Activated CD4-positive, alpha-beta memory T cell treated with anti-CD3 and anti-CD28 coated beads for 36 hours (primary cell): ENCODE measurements at regions of chr6 and their contacts with region 1.

Region 1: GRCh38 chr6:140921366-140922226 is 1211.1 kb upstream of the GJE1 start:
- DNase-seq: no peak
- H3K4me3 Mint-ChIP-seq: no peak overlapping the region
- H3K27ac Mint-ChIP-seq: no peak overlapping the region
- H3K4me1 Mint-ChIP-seq: peaks cover 7% of the 10 kb centered on the region
- H3K27me3 Mint-ChIP-seq: peaks cover 5% of the 10 kb centered on the region

Region 2: DNA sequence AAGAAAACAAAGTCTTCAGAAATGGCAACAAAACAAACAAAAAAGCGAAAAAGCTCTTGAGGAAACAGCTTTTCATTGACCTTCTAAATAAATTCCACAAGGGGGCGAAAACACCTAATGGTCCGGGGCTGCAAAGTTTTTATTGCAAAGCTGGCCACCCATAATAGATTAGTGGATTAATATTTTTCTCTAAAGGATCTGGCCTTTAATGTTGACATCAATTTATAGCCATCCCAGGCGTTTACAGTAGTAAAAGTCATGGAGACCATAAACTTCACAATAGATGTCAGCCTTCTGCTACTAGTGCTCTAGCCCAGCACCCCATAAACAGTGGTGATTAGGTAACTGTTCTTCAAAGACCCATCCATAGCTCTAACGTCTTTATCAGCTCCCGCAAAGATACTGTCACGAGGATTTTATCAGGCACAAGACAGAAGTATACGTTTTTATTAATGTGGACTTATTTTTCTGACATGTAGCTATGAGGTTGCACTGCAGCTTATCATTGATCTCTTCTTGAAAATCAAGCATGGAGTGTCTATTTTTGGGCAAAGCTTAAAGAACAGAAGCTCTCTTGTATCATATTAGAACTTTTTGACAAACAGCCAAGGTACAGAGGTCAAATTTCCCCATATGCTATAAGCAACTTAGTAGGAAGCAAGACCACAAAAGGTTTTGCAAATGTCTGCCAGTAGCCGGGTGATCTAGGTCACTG is 1551.9 kb before region 1 on chr6:
- CTCF ChIA-PET with region 1: interaction called, 8 read pairs
- POLR2A ChIA-PET with region 1: no interaction called
- intact Hi-C with region 1: loop called (anchors 1 kb)
- DNase-seq: peak; percentile 14
- H3K4me3 Mint-ChIP-seq: peak overlapping the region; percentile 15
- H3K27ac Mint-ChIP-seq: peak overlapping the region; percentile 51
- H3K4me1 Mint-ChIP-seq: peaks cover 39% of the 10 kb centered on the region
- H3K27me3 Mint-ChIP-seq: no peaks in the 10 kb centered on the region

Region 3: GRCh38 chr6:139881728-139882211 is 1039.8 kb before region 1 on chr6:
- CTCF ChIA-PET with region 1: interaction called, 4 read pairs
- POLR2A ChIA-PET with region 1: no interaction called
- intact Hi-C with region 1: loop called (anchors 1 kb)
- DNase-seq: peak; percentile 19
- H3K4me3 Mint-ChIP-seq: no peak overlapping the region
- H3K27ac Mint-ChIP-seq: no peak overlapping the region
- H3K4me1 Mint-ChIP-seq: no peaks in the 10 kb centered on the region
- H3K27me3 Mint-ChIP-seq: peaks cover 6% of the 10 kb centered on the region